MCF 10A (cell line): ENCODE measurements at regions of chr17 and their contacts with region 1.

Region 1: GRCh38 chr17:4161179-4161559 is 18.2 kb downstream of the CYB5D2 start:
- DNase-seq: peak; percentile 96
- H3K4me3 Mint-ChIP-seq: peak overlapping the region; percentile 59
- H3K27ac Mint-ChIP-seq: peak overlapping the region; percentile 98
- H3K4me1 Mint-ChIP-seq: peaks cover 54% of the 10 kb centered on the region
- H3K27me3 Mint-ChIP-seq: no peaks in the 10 kb centered on the region
- CTCF ChIP-seq: peak; percentile 13

Region 2: GRCh38 chr17:4175921-4176807 is 15.0 kb after region 1 on chr17:
- CTCF ChIA-PET with region 1: interaction called, 5 read pairs
- POLR2A ChIA-PET with region 1: interaction called, 19 read pairs
- intact Hi-C with region 1: no loop called
- DNase-seq: no peak
- H3K4me3 Mint-ChIP-seq: no peak overlapping the region
- H3K27ac Mint-ChIP-seq: peak overlapping the region; percentile 36
- H3K4me1 Mint-ChIP-seq: no peaks in the 10 kb centered on the region
- H3K27me3 Mint-ChIP-seq: no peaks in the 10 kb centered on the region
- CTCF ChIP-seq: no peak

Region 3: DNA sequence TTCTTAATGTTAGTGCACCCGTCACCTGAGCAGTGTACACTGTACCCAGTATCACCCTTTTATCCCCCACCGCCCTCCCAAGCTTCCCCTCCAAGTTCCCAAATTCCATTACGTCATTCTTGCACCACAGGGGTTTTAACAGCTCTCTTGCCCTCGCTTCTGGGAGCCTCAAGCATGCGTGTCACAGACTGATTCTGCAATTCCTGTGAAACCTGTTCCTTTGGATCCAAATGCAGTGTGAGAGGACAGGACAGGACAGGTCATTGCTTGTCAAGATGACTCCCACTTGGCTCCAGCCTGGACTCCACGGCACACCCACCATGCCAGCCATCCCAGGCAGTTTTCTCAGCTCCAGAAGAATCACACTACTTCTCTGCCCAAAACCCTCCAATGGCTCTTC is 25.9 kb after region 1 on chr17:
- CTCF ChIA-PET with region 1: interaction called, 9 read pairs
- POLR2A ChIA-PET with region 1: interaction called, 40 read pairs
- intact Hi-C with region 1: no loop called
- DNase-seq: peak; percentile 86
- H3K4me3 Mint-ChIP-seq: no peak overlapping the region
- H3K27ac Mint-ChIP-seq: no peak overlapping the region
- H3K4me1 Mint-ChIP-seq: peaks cover 11% of the 10 kb centered on the region
- H3K27me3 Mint-ChIP-seq: no peaks in the 10 kb centered on the region
- CTCF ChIP-seq: no peak